ENCODE measurements at regions of chr19 and their contacts with region 1.

Region 1: GRCh38 chr19:48391107-48391986 is at the start of gene KDELR1:
- DNase-seq: peak; percentile 77 to 78
- ATAC-seq: peak; percentile 54 to 72
- H3K4me3 ChIP-seq: peak within 1 kb of the TSS; percentile 97
- H3K27ac ChIP-seq: peak within 1 kb of the TSS; percentile 95 to 97
- H3K4me1 ChIP-seq: peaks cover 54% of the 10 kb centered on the region
- CTCF ChIP-seq: peak; percentile 90
- EP300 ChIP-seq: no peak
- POLR2A ChIP-seq: peak; percentile 72
- RAD21 ChIP-seq: peak; percentile 31 to 47; a peak in 4 of 5 replicates
- polyA plus RNA-seq, gene KDELR1: 200 and 270 TPM in 2 replicates

Region 2: GRCh38 chr19:48340995-48341394 is 50.4 kb before region 1 on chr19:
- CTCF ChIA-PET with region 1: interaction called, 30 read pairs
- POLR2A ChIA-PET with region 1: no interaction called
- DNase-seq: no peak
- ATAC-seq: peak; percentile 5 to 26; a peak in 2 of 6 replicates
- H3K4me3 ChIP-seq: no peak overlapping the region
- H3K27ac ChIP-seq: peak overlapping the region in 1 of 2 experiments; percentile 6; a peak in 2 of 6 replicates
- H3K4me1 ChIP-seq: peaks cover 20% of the 10 kb centered on the region
- CTCF ChIP-seq: no peak
- EP300 ChIP-seq: no peak
- POLR2A ChIP-seq: no peak
- RAD21 ChIP-seq: no peak

Region 3: GRCh38 chr19:48363810-48364563 is 27.4 kb before region 1 on chr19 and contains the starts of genes SYNGR4 and TMEM143:
- CTCF ChIA-PET with region 1: interaction called, 54 read pairs
- POLR2A ChIA-PET with region 1: interaction called, 13 read pairs
- DNase-seq: peak; percentile 100
- ATAC-seq: peak; percentile 75 to 89
- H3K4me3 ChIP-seq: peak within 1 kb of the TSS; percentile 51
- H3K27ac ChIP-seq: peak within 1 kb of the TSS; percentile 90 to 97
- H3K4me1 ChIP-seq: peaks cover 8% of the 10 kb centered on the region
- CTCF ChIP-seq: no peak
- EP300 ChIP-seq: no peak
- POLR2A ChIP-seq: peak; percentile 70
- RAD21 ChIP-seq: no peak
- polyA plus RNA-seq, gene SYNGR4: 2.3 and 2.9 TPM in 2 replicates
- polyA plus RNA-seq, gene TMEM143: 7.4 and 7.6 TPM in 2 replicates

Region 4: GRCh38 chr19:48379058-48379457 is 12.3 kb before region 1 on chr19:
- CTCF ChIA-PET with region 1: interaction called, 54 read pairs
- POLR2A ChIA-PET with region 1: interaction called, 6 read pairs
- DNase-seq: no peak
- ATAC-seq: no peak; a peak in 2 of 6 replicates
- H3K4me3 ChIP-seq: no peak overlapping the region
- H3K27ac ChIP-seq: no peak overlapping the region
- H3K4me1 ChIP-seq: no peaks in the 10 kb centered on the region
- CTCF ChIP-seq: no peak
- EP300 ChIP-seq: no peak
- POLR2A ChIP-seq: no peak
- RAD21 ChIP-seq: no peak

Region 5: DNA sequence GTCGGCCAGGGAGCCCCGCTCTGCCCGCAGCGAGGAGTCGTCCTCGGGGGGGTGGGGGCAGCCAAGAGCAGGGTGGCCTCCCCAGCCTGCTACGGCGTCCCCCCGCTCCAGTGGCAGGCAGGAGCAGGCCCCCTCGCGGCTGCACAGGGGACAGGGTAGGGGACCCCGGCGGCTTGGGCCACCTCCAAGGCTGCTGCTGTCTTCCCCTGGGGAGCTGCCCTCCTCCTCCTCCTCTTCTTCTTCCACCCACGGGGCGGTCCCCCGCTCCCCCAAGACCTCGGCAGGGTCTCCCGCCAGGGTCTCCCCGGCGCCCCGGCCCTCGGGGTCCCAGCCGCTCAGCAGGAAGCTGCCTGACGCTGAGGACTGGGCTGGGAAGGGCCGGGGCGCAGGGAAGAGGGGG is 107.6 kb after region 1 on chr19:
- CTCF ChIA-PET with region 1: no interaction called
- POLR2A ChIA-PET with region 1: no interaction called
- DNase-seq: no peak
- ATAC-seq: no peak
- H3K4me3 ChIP-seq: no peak overlapping the region
- H3K27ac ChIP-seq: peak overlapping the region in 1 of 2 experiments; percentile 12; a peak in 1 of 6 replicates
- H3K4me1 ChIP-seq: peaks cover 24% of the 10 kb centered on the region
- CTCF ChIP-seq: no peak
- EP300 ChIP-seq: no peak
- POLR2A ChIP-seq: no peak
- RAD21 ChIP-seq: no peak

Region 6: GRCh38 chr19:48608798-48609263 is 217.5 kb after region 1 on chr19:
- CTCF ChIA-PET with region 1: interaction called, 15 read pairs
- POLR2A ChIA-PET with region 1: no interaction called
- DNase-seq: peak; percentile 83 to 88
- ATAC-seq: peak; percentile 75 to 82
- H3K4me3 ChIP-seq: no peak overlapping the region
- H3K27ac ChIP-seq: peak overlapping the region; percentile 65 to 78
- H3K4me1 ChIP-seq: peaks cover 5% of the 10 kb centered on the region; the same call in 1 of the 3 replicates
- CTCF ChIP-seq: peak; percentile 92
- EP300 ChIP-seq: no peak
- POLR2A ChIP-seq: no peak
- RAD21 ChIP-seq: peak; percentile 94 to 98

Region 7: DNA sequence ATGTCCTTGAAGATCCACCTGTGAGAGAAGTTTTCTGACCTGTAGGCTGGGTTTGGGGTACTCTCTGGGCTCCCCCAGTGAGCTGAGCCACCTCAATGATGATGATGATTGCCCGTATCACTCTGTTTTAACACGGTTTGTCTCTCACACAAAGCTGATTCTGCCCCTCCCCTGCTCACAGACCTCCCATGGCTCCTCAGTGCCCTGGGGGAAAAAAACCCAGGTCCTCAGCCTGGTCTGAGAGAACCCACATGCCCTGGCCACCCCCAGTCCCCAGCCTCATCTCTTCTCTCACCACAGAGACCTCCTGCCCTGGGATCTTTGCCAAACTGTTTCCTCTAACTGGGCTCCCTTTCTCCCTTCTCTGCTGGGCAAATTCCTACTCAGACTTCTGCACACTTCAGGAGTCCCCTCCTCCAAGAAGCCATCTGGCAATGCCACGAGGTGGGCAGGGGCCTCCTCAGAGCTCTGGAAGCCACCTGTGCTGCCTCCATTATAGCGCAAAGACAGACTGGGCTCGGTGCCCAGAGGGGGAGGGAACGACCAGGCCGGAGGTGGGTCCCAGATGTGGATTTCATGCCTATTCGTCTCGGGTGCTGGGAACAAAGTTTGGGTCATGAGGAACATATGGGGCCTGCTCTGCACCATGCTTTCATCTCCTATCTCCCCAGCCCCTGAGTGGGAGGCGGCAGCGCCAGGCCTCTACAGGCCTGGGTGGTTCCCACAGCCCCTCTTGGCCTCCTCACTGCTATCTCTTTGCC is 263.1 kb after region 1 on chr19:
- CTCF ChIA-PET with region 1: no interaction called
- POLR2A ChIA-PET with region 1: no interaction called
- DNase-seq: no peak
- ATAC-seq: no peak
- H3K4me3 ChIP-seq: no peak overlapping the region
- H3K27ac ChIP-seq: 0 out of 6 replicates have a peak overlapping the region, but pooled peaks of 1 of the 2 experiments have one; percentile 5
- H3K4me1 ChIP-seq: no peaks in the 10 kb centered on the region
- CTCF ChIP-seq: no peak
- EP300 ChIP-seq: no peak
- POLR2A ChIP-seq: no peak
- RAD21 ChIP-seq: no peak